ENCODE measurements at regions of chr18 and their contacts with region 1.

Region 1: DNA sequence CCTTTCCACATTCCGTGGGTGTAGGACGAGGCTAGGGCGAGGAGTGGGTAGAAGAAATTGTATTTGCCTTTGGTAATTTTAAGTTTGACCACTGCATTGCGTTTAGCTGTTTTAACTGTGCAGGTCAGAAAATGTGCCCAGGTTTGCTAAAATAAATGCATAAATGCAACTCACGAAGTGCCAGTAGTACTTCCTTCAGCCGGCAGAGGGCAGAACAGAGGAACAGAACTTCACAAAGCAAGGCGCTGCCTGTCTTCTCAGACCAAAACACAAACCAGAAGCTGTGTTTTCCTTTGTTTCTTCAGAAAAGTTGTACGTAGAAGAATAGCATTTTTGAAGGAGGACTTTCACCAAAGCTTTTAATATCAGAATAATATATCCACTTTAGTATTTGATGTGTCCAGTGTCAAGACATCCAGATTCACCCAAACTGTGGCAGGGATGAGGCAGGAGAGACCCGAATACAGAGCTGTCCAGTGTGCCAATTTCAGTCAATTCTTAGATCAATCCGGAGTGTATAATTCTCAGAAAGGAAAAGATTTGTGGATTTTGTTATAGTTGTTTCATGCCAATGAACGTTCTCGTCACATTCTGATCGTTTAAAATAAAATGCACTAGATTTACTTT is 348.6 kb downstream of the DLGAP1 start:
- DNase-seq: no peak
- ATAC-seq: peak; percentile 70
- H3K4me3 ChIP-seq: no peak overlapping the region
- H3K27ac ChIP-seq: no peak overlapping the region
- H3K4me1 ChIP-seq: no peaks in the 10 kb centered on the region
- H3K27me3 ChIP-seq: no peaks in the 10 kb centered on the region
- CTCF ChIP-seq: peak; percentile 53 to 79 (median 73); a peak in 5 of 6 replicates
- EP300 ChIP-seq: no peak
- POLR2A ChIP-seq: no peak
- RAD21 ChIP-seq: peak; percentile 69

Region 2: GRCh38 chr18:4119813-4120212 is 13.3 kb after region 1 on chr18:
- CTCF ChIA-PET with region 1: interaction called, 45 read pairs
- POLR2A ChIA-PET with region 1: interaction called, 9 read pairs
- RAD21 ChIA-PET with region 1: interaction called, 10 read pairs
- SMC1A ChIA-PET with region 1: interaction called, 23 read pairs
- in situ Hi-C with region 1: no loop called
- intact Hi-C with region 1: no loop called
- DNase-seq: no peak
- ATAC-seq: no peak
- H3K4me3 ChIP-seq: no peak overlapping the region
- H3K27ac ChIP-seq: no peak overlapping the region
- H3K4me1 ChIP-seq: no peaks in the 10 kb centered on the region
- H3K27me3 ChIP-seq: no peaks in the 10 kb centered on the region
- CTCF ChIP-seq: no peak; a peak in 1 of 6 replicates
- EP300 ChIP-seq: no peak
- POLR2A ChIP-seq: no peak
- RAD21 ChIP-seq: 0 out of 2 replicates have a peak, but pooled peaks have one; percentile 4

Region 3: DNA sequence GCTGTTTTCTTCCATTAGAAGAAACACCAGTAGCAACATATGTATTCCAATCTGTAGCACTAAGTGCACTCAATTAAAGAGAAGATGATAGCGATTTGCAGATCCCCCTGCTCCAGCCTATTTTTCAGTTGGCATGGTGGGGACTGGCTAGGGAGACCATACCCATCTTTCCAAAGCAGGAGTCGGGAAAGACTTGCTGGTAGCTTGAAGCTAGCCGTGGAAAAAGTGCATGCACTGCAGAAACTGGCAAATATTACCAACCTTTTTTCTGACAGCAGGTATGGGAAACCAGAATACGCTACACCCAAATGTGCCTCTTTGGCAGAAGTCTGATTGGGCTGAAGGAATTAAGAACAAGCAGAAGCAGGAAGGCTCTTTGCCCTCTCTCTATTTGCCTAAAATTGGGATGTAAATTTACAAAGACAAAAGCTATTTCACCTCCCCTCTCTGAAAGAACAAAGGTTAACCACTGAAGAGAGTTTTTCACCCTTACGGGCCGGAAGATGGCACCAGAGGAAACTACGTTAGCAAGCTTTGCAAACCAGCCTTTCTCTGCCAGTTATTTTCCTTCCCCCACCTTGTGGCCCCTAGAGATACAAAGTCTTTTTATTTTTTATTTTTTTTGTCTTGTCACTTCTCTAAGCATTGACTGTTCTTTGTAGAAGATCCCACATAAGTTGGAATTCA is 75.5 kb after region 1 on chr18:
- CTCF ChIA-PET with region 1: interaction called, 9 read pairs
- POLR2A ChIA-PET with region 1: no interaction called
- RAD21 ChIA-PET with region 1: interaction called, 4 read pairs
- SMC1A ChIA-PET with region 1: interaction called, 11 read pairs
- in situ Hi-C with region 1: no loop called
- intact Hi-C with region 1: no loop called
- DNase-seq: no peak
- ATAC-seq: peak; percentile 84
- H3K4me3 ChIP-seq: no peak overlapping the region
- H3K27ac ChIP-seq: no peak overlapping the region
- H3K4me1 ChIP-seq: no peaks in the 10 kb centered on the region
- H3K27me3 ChIP-seq: no peaks in the 10 kb centered on the region
- CTCF ChIP-seq: peak in 1 of 3 experiments; percentile 35; a peak in 2 of 6 replicates
- EP300 ChIP-seq: no peak
- POLR2A ChIP-seq: no peak
- RAD21 ChIP-seq: peak; percentile 38

Region 4: GRCh38 chr18:4251873-4252272 is 145.4 kb after region 1 on chr18:
- CTCF ChIA-PET with region 1: interaction called, 10 read pairs
- POLR2A ChIA-PET with region 1: no interaction called
- RAD21 ChIA-PET with region 1: interaction called, 18 read pairs
- SMC1A ChIA-PET with region 1: interaction called, 27 read pairs
- in situ Hi-C with region 1: no loop called
- intact Hi-C with region 1: no loop called
- DNase-seq: no peak
- ATAC-seq: peak; percentile 75
- H3K4me3 ChIP-seq: no peak overlapping the region
- H3K27ac ChIP-seq: no peak overlapping the region
- H3K4me1 ChIP-seq: no peaks in the 10 kb centered on the region; the same call in 1 of the 2 replicates
- H3K27me3 ChIP-seq: no peaks in the 10 kb centered on the region
- CTCF ChIP-seq: no peak
- EP300 ChIP-seq: peak; percentile 33 to 40; a peak in 2 of 4 replicates
- POLR2A ChIP-seq: no peak
- RAD21 ChIP-seq: no peak

Region 5: DNA sequence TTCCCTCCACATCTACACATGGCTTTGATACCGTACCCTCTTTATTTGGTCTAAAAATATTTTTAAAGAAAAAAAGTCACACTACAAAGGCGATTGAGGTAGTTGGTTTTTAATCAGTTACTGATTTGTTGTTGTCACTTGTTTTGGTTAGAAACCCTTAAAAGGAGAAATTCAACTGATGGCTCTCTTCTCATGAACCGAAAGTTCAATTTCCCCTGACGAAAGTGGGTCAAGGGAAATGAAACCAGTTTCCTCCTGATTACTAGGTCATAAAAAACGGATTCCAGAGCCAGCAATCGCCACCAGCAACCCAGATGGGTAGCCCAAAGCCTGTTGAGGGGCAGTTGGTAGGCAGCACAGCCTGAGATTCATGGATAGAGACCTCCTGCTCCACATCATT is 285.3 kb after region 1 on chr18:
- CTCF ChIA-PET with region 1: interaction called, 3 read pairs
- POLR2A ChIA-PET with region 1: no interaction called
- RAD21 ChIA-PET with region 1: interaction called, 3 read pairs
- SMC1A ChIA-PET with region 1: interaction called, 4 read pairs
- in situ Hi-C with region 1: no loop called
- intact Hi-C with region 1: loop called (anchors 10 kb)
- DNase-seq: peak; percentile 60
- ATAC-seq: peak; percentile 65
- H3K4me3 ChIP-seq: no peak overlapping the region
- H3K27ac ChIP-seq: 0 out of 2 replicates have a peak overlapping the region, but pooled peaks have one; percentile 20
- H3K4me1 ChIP-seq: no peaks in the 10 kb centered on the region
- H3K27me3 ChIP-seq: no peaks in the 10 kb centered on the region
- CTCF ChIP-seq: no peak
- EP300 ChIP-seq: peak; percentile 96 to 99
- POLR2A ChIP-seq: no peak
- RAD21 ChIP-seq: no peak

Region 6: GRCh38 chr18:4677006-4677405 is 570.5 kb after region 1 on chr18:
- CTCF ChIA-PET with region 1: no interaction called
- POLR2A ChIA-PET with region 1: no interaction called
- RAD21 ChIA-PET with region 1: no interaction called
- SMC1A ChIA-PET with region 1: no interaction called
- in situ Hi-C with region 1: no loop called
- intact Hi-C with region 1: no loop called
- DNase-seq: no peak
- ATAC-seq: no peak
- H3K4me3 ChIP-seq: no peak overlapping the region
- H3K27ac ChIP-seq: no peak overlapping the region
- H3K4me1 ChIP-seq: no peaks in the 10 kb centered on the region
- H3K27me3 ChIP-seq: no peaks in the 10 kb centered on the region
- CTCF ChIP-seq: no peak
- EP300 ChIP-seq: no peak
- POLR2A ChIP-seq: no peak
- RAD21 ChIP-seq: no peak

Measured in GM12878 (cell line).